Lower leg skin (tissue), 4 donors: ENCODE measurements at regions of chr6 and their contacts with region 1.

Region 1: DNA sequence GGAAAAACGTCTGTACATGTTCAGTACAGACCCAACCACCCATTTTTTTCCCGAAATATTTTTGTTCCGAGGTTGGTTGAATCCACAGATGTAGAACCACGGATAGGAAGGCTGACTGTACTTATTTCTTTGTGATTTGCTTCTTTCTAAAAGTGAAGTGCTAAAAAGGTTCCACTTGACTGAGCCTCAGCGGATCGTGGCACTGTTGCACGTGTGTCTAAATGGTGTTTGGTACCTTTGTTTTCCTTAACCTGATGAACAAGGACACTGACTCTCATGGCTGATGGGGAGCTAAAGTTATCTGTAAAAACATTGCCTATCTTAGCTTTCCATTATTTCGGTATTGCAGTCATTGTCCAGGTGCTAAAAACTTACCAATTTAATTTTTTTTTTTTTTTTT is 6.2 kb downstream of the BPHL start:
- DNase-seq: peak in 1 of 2 donors; percentile 39
- H3K4me3 ChIP-seq: no peak overlapping the region
- CTCF ChIP-seq: no peak
- POLR2A ChIP-seq: no peak

Region 2: GRCh38 chr6:3209114-3210023 is 84.7 kb after region 1 on chr6:
- intact Hi-C with region 1: loop called (anchors 5 kb)
- DNase-seq: peak; percentile 81 to 92
- H3K4me3 ChIP-seq: no peak overlapping the region
- CTCF ChIP-seq: no peak
- POLR2A ChIP-seq: no peak

Region 3: GRCh38 chr6:3258720-3259490 is 134.2 kb after region 1 on chr6 and contains the start of gene PSMG4:
- intact Hi-C with region 1: loop called (anchors 10 kb)
- DNase-seq: peak; percentile 92 to 99
- H3K4me3 ChIP-seq: peak within 1 kb of the TSS; percentile 77
- CTCF ChIP-seq: no peak
- POLR2A ChIP-seq: no peak
- total RNA-seq, gene PSMG4: 16.2 to 22.1 (median 19.1) TPM

Region 4: GRCh38 chr6:4192173-4192572 is 1067.5 kb after region 1 on chr6:
- intact Hi-C with region 1: no loop called
- DNase-seq: peak in 1 of 2 donors; percentile 66
- H3K4me3 ChIP-seq: no peak overlapping the region
- CTCF ChIP-seq: no peak
- POLR2A ChIP-seq: no peak